PC-3 (cell line): ENCODE measurements at regions of chr2 and their contacts with region 1.

Region 1: GRCh38 chr2:69933839-69934613 is 19.1 kb downstream of the MXD1 start:
- DNase-seq: peak; percentile 86
- ATAC-seq: peak; percentile 77
- H3K4me3 ChIP-seq: peak overlapping the region; percentile 41
- H3K27ac ChIP-seq: peak overlapping the region; percentile 93
- H3K4me1 ChIP-seq: peaks cover 40% of the 10 kb centered on the region
- H3K27me3 ChIP-seq: no peaks in the 10 kb centered on the region
- CTCF ChIP-seq: no peak

Region 2: DNA sequence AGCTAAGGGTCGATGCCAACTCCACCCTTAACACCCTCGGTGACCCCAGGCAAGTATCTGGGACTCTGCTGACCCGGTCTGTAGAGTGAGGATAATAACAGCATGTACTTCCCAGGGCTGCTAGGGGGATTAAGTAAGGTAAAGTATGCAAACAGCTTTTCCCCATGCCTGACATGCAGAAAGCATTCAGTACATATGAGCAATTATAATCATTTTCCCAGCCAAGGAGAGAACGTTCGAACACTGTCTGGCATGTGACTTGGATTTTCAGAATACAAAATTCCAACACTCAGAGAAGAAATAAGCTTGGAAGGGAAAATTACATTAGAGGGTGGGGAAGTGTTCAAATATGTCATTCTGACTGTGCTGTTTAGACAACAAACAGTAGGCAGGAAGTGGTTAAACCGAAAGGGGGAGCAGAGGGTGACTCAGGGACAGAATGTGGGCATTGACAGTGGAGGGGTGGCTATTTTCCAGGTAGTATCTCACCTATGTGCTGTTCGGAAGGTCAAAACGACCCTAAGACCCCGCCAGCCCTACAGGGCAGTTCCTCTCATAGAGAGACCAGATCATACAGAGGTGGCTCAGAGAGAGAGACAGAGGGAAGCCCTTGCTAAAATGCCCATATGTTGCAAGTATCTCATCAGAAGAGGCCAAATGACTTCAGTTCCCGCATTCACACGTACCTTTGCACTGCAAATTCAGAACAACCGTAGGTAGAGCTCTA is 12.5 kb after region 1 on chr2:
- CTCF ChIA-PET with region 1: no interaction called
- POLR2A ChIA-PET with region 1: no interaction called
- intact Hi-C with region 1: loop called (anchors 1 kb)
- DNase-seq: peak; percentile 95
- ATAC-seq: peak; percentile 85
- H3K4me3 ChIP-seq: peak overlapping the region; percentile 41
- H3K27ac ChIP-seq: peak overlapping the region; percentile 98
- H3K4me1 ChIP-seq: peaks cover 53% of the 10 kb centered on the region
- H3K27me3 ChIP-seq: no peaks in the 10 kb centered on the region
- CTCF ChIP-seq: no peak

Region 3: GRCh38 chr2:69985688-69986087 is 51.7 kb after region 1 on chr2:
- CTCF ChIA-PET with region 1: no interaction called
- POLR2A ChIA-PET with region 1: no interaction called
- intact Hi-C with region 1: loop called (anchors 5 kb)
- DNase-seq: no peak
- ATAC-seq: no peak
- H3K4me3 ChIP-seq: no peak overlapping the region
- H3K27ac ChIP-seq: no peak overlapping the region
- H3K4me1 ChIP-seq: peaks cover 17% of the 10 kb centered on the region
- H3K27me3 ChIP-seq: no peaks in the 10 kb centered on the region
- CTCF ChIP-seq: no peak

Region 4: GRCh38 chr2:70070541-70071268 is 136.7 kb after region 1 on chr2:
- CTCF ChIA-PET with region 1: interaction called, 11 read pairs
- POLR2A ChIA-PET with region 1: no interaction called
- intact Hi-C with region 1: no loop called
- DNase-seq: peak; percentile 83
- ATAC-seq: peak; percentile 99
- H3K4me3 ChIP-seq: no peak overlapping the region
- H3K27ac ChIP-seq: no peak overlapping the region
- H3K4me1 ChIP-seq: no peaks in the 10 kb centered on the region
- H3K27me3 ChIP-seq: no peaks in the 10 kb centered on the region
- CTCF ChIP-seq: peak; percentile 88

Region 5: DNA sequence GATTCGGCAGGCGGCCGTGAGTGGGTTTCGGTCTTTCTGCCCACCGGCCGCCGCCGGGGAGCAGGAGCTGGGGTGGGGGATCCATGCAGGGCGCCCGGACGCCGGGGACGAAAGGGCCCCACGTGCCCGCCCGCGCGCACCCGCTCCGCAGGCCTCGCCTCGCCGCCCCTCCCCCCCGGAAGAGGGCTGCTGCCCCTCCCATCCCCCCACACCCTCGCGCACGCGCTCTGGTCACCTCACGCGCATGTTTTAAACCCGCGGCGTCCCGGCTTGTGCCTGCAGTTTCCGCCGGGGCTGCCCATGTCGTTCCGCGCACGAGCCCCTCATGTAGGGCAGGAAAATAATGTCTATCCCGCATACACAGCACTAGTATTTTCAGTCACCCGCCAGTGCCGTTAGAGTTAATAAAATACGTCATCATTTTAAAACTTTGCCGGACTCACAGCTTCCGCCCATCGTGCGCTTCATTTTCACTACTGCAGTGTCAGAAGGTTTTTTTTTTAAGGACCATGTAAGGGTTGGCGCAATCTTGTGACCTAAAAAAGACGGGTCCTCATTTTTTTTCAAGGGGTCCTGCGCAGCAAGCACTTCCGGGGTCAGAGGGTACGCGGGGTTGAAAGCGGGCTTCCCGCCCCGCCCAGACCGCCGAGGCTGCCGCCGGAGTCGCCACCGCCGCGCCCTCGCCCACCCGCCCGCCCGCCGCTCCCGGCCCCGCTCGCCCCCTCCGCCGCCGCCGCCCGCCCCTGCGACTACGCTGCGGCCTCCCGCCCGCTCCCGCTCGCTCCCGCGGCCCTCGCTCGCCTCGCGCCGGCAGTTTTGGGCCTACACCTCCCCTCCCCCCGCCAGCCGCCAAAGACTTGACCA is 153.0 kb after region 1 on chr2 and contains the start of gene PCBP1:
- CTCF ChIA-PET with region 1: no interaction called
- POLR2A ChIA-PET with region 1: no interaction called
- intact Hi-C with region 1: loop called (anchors 5 kb)
- DNase-seq: peak; percentile 87
- ATAC-seq: peak; percentile 21
- H3K4me3 ChIP-seq: peak within 1 kb of the TSS; percentile 95
- H3K27ac ChIP-seq: peak within 1 kb of the TSS; percentile 100
- H3K4me1 ChIP-seq: peaks cover 55% of the 10 kb centered on the region
- H3K27me3 ChIP-seq: no peaks in the 10 kb centered on the region
- CTCF ChIP-seq: no peak
- total RNA-seq, gene PCBP1: 39.2 and 59.7 TPM in 2 replicates

Region 6: GRCh38 chr2:71276311-71277146 is 1342.5 kb after region 1 on chr2:
- CTCF ChIA-PET with region 1: no interaction called
- POLR2A ChIA-PET with region 1: no interaction called
- intact Hi-C with region 1: no loop called
- DNase-seq: peak; percentile 96
- ATAC-seq: peak; percentile 91
- H3K4me3 ChIP-seq: peak overlapping the region; percentile 76
- H3K27ac ChIP-seq: no peak overlapping the region
- H3K4me1 ChIP-seq: peaks cover 23% of the 10 kb centered on the region
- H3K27me3 ChIP-seq: no peaks in the 10 kb centered on the region
- CTCF ChIP-seq: no peak